A549 (cell line): ENCODE measurements at regions of chr11 and their contacts with region 1.

Region 1: DNA sequence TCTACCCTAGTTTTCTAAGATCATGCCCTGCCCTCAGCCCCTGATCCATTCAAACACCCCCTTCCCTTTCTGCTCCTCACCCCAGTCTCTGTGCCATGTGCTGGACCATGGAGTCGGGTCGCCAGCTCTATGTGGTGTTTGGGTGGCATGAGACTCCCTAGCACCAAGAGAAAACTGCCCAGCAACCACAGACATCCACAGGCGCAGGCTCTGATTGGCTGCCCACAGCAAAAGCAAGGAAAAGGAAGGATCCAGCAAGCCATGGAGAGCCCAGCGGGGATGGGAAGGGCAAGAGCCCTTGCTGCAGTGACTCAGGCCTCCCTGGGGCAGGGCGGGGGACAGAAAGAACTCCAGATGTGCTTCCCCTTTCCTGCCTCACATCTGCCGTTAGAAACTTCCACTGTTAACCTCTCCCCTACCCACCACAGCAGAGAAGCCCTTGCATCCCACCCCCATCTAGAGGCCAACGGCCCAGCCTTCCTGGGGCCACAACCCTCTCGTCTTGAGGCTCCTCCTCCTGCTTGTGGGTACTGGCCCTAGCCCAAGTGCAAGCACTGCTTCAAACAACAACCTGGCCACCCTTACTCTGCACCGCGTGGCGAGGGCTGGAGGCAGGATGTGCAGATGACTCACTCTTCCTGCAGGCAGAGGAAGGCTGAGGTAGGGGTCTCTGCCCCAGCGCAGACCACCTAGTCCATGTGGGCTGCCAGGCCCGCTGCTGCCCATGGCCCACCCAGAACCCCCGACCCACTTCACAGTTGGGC is 9.7 kb upstream of the AHNAK start:
- DNase-seq: peak; percentile 95 to 99
- ATAC-seq: peak; percentile 55 to 76
- H3K4me3 ChIP-seq: peak overlapping the region; percentile 4; the same call in 1 of the 3 replicates
- H3K27ac ChIP-seq: peak overlapping the region; percentile 90 to 94
- H3K4me1 ChIP-seq: peaks cover 96% of the 10 kb centered on the region
- CTCF ChIP-seq: no peak
- EP300 ChIP-seq: no peak
- POLR2A ChIP-seq: no peak
- RAD21 ChIP-seq: peak in 1 of 2 experiments; percentile 10; a peak in 1 of 5 replicates

Region 2: DNA sequence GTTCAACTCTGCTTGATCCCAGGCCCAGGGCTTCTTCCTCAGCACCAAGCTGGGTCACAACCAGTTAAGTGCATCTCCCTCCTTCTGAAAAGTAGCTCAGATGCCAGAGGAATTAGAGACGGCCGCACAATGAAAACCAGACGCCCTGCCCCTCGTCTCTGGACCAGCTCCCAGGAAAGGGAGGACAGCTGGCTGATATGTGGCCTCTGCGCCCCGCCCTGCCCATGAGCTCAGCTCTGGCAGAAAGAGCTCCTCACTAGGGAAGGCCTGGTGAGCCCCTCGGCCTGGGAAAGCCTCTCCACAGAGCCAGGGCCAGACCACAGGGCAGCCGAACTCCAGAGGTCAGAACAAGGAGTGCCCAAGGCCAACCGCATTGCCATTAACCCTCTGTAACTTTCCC is 155.5 kb before region 1 on chr11:
- CTCF ChIA-PET with region 1: interaction called, 129 read pairs
- POLR2A ChIA-PET with region 1: no interaction called
- DNase-seq: no peak
- ATAC-seq: no peak
- H3K4me3 ChIP-seq: no peak overlapping the region
- H3K27ac ChIP-seq: peak overlapping the region in 1 of 2 experiments; percentile 48; a peak in 2 of 6 replicates
- H3K4me1 ChIP-seq: peaks cover 22% of the 10 kb centered on the region
- CTCF ChIP-seq: no peak
- EP300 ChIP-seq: no peak
- POLR2A ChIP-seq: no peak
- RAD21 ChIP-seq: no peak

Region 3: GRCh38 chr11:62419314-62419929 is 136.9 kb before region 1 on chr11:
- CTCF ChIA-PET with region 1: interaction called, 226 read pairs
- POLR2A ChIA-PET with region 1: interaction called, 4 read pairs
- DNase-seq: no peak
- ATAC-seq: no peak
- H3K4me3 ChIP-seq: no peak overlapping the region
- H3K27ac ChIP-seq: peak overlapping the region in 1 of 2 experiments; percentile 17; a peak in 1 of 6 replicates
- H3K4me1 ChIP-seq: peaks cover 4% of the 10 kb centered on the region; the same call in 1 of the 3 replicates
- CTCF ChIP-seq: no peak
- EP300 ChIP-seq: no peak
- POLR2A ChIP-seq: no peak
- RAD21 ChIP-seq: no peak

Region 4: GRCh38 chr11:62497132-62497915 is 59.0 kb before region 1 on chr11:
- CTCF ChIA-PET with region 1: interaction called, 25 read pairs
- POLR2A ChIA-PET with region 1: no interaction called
- DNase-seq: peak; percentile 75 to 85
- ATAC-seq: peak; percentile 91 to 96
- H3K4me3 ChIP-seq: no peak overlapping the region
- H3K27ac ChIP-seq: peak overlapping the region; percentile 21 to 65; a peak in 4 of 6 replicates
- H3K4me1 ChIP-seq: peaks cover 29% of the 10 kb centered on the region
- CTCF ChIP-seq: peak; percentile 71
- EP300 ChIP-seq: no peak
- POLR2A ChIP-seq: no peak
- RAD21 ChIP-seq: peak; percentile 82 to 84

Region 5: DNA sequence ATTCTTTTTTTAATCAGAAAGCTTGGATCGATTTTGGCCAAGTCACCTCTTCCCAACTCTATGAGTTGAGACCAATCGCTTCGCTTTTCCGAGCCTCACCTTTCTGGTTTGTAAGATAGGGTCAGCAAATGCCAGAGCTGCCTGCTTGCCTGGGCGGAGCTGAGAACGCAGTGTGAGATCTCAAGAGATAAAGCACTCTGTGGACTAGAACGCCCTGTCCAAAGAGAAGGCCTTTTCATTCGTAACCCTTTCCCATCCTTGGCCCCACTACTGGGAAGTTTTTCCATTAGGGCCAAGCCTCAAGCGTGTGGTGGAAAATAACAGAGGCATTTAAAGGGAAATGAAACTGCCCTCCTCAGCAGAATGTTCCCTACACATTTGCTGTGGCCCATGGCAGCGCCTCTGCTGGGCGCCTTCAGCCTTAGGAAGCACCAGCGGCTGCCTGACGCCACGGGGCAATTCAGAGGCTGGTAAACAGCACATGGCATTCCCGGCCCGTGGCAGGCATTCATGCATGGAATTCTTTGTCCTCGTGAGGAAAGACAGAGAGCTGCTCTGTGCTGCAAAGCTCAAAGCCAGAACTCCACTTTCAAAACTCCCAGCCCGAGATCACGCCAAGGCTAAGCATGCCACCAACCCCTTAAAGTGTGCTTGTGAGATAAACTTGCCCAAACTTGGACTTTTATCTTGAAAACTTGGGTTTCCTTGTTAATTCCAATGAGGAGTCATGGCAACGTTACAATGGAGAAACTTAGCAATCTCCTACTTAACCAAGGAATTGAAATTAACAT is 47.8 kb before region 1 on chr11:
- CTCF ChIA-PET with region 1: interaction called, 20 read pairs
- POLR2A ChIA-PET with region 1: interaction called, 4 read pairs
- DNase-seq: peak; percentile 88 to 89
- ATAC-seq: peak; percentile 94 to 98
- H3K4me3 ChIP-seq: 0 out of 3 replicates have a peak overlapping the region, but pooled peaks have one; percentile 16
- H3K27ac ChIP-seq: peak overlapping the region; percentile 82 to 86
- H3K4me1 ChIP-seq: peaks cover 63% of the 10 kb centered on the region
- CTCF ChIP-seq: peak; percentile 50
- EP300 ChIP-seq: no peak
- POLR2A ChIP-seq: no peak
- RAD21 ChIP-seq: peak; percentile 22 to 47; a peak in 2 of 5 replicates

Region 6: GRCh38 chr11:62573592-62574362 is 17.5 kb after region 1 on chr11 and contains the start of gene EEF1G:
- CTCF ChIA-PET with region 1: interaction called, 52 read pairs
- POLR2A ChIA-PET with region 1: interaction called, 15 read pairs
- DNase-seq: peak; percentile 99 to 100
- ATAC-seq: peak; percentile 91 to 96
- H3K4me3 ChIP-seq: peak within 1 kb of the TSS; percentile 97
- H3K27ac ChIP-seq: peak within 1 kb of the TSS; percentile 93 to 94
- H3K4me1 ChIP-seq: peaks cover 41% of the 10 kb centered on the region
- CTCF ChIP-seq: no peak
- EP300 ChIP-seq: no peak
- POLR2A ChIP-seq: peak; percentile 86
- RAD21 ChIP-seq: no peak
- polyA plus RNA-seq, gene EEF1G: 1,728 and 1,795 TPM in 2 replicates